Panc1 (cell line): ENCODE measurements at regions of chr7 and their contacts with region 1.

Region 1: GRCh38 chr7:100413889-100414288 is 14.6 kb downstream of the ZCWPW1 start:
- DNase-seq: no peak
- ATAC-seq: no peak
- H3K4me3 ChIP-seq: no peak overlapping the region
- H3K27ac ChIP-seq: no peak overlapping the region
- H3K4me1 ChIP-seq: no peaks in the 10 kb centered on the region
- H3K27me3 ChIP-seq: 0 out of 2 replicates have a peak, but pooled peaks cover 2% of the 10 kb centered on the region
- CTCF ChIP-seq: no peak

Region 2: DNA sequence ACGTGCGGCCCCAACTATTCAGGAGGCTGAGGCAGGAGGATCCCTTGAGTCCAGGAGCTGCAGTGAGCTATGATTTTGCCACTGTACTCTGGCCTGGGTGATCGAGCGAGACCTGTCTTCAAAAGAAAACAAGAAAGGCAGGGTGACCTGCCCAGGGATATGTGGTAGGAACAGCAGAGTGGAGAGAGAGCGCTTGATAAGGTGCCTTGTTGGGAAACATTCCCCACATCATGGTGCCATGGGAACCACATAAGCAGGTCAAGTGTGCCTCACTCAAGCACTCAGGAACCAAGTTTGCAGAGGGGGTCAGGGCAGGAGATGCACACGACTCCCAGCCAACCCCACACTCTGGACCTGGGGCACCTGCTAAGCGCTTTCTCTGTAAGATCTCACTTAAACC is 156.9 kb before region 1 on chr7:
- CTCF ChIA-PET with region 1: interaction called, 16 read pairs
- POLR2A ChIA-PET with region 1: no interaction called
- in situ Hi-C with region 1: no loop called
- intact Hi-C with region 1: no loop called
- DNase-seq: no peak
- ATAC-seq: no peak
- H3K4me3 ChIP-seq: no peak overlapping the region
- H3K27ac ChIP-seq: no peak overlapping the region
- H3K4me1 ChIP-seq: no peaks in the 10 kb centered on the region
- H3K27me3 ChIP-seq: no peaks in the 10 kb centered on the region
- CTCF ChIP-seq: no peak